IMR-90 (cell line): ENCODE measurements at regions of chr14 and their contacts with region 1.

Region 1: DNA sequence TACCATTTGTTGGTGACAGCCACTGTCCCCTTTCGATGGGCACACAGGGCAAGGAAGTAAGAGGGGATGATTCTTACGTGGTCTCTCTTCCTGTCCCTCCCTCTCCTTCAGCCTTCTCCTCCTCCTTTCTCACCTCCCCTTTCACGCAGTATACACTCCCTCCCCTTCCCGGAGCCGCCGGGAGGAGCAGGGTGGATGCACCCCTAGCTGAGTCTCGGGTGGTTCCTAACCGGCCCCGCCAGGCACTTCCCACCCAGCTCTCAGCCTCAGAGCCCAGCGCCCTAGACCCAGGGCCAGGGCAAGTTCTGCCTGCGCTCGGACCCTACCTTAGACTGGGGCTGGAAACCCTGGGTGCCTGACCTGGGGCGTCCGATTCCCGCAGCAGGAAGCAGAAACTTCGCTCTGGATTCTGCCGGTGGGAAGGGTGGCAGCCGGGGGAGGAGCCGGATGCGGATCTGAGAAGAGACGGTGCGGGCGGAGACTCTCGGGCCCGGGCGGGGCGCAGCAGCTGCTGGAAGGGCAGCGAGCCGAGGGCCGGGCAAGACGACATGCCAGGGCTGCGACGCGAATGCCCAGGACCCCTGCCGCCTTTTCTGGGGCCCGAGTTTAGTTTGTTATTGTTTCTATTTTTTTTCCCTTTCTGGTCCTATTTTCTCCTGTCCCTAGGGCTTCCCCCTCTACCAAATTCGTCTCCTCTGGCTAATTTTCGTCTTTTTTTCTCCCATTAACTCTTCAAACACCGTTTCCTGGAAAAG is at the start of gene TEP1:
- DNase-seq: peak; percentile 79
- ATAC-seq: peak; percentile 93
- H3K4me3 ChIP-seq: peak within 1 kb of the TSS; percentile 79
- H3K27ac ChIP-seq: peak within 1 kb of the TSS; percentile 98
- H3K4me1 ChIP-seq: peaks cover 6% of the 10 kb centered on the region
- H3K27me3 ChIP-seq: 0 out of 2 replicates have a peak, but pooled peaks cover 2% of the 10 kb centered on the region
- CTCF ChIP-seq: no peak
- POLR2A ChIP-seq: peak; percentile 80
- RAD21 ChIP-seq: no peak
- total RNA-seq, gene TEP1: 7.8 and 12.4 TPM in 2 replicates

Region 2: GRCh38 chr14:19771895-19772430 is 641.3 kb before region 1 on chr14:
- CTCF ChIA-PET with region 1: no interaction called
- POLR2A ChIA-PET with region 1: no interaction called
- dilution Hi-C with region 1: no loop called
- in situ Hi-C with region 1: no loop called
- intact Hi-C with region 1: no loop called
- DNase-seq: no peak
- ATAC-seq: no peak
- H3K4me3 ChIP-seq: no peak overlapping the region
- H3K27ac ChIP-seq: no peak overlapping the region
- H3K4me1 ChIP-seq: no peaks in the 10 kb centered on the region
- H3K27me3 ChIP-seq: no peaks in the 10 kb centered on the region
- CTCF ChIP-seq: no peak
- POLR2A ChIP-seq: no peak
- RAD21 ChIP-seq: no peak

Region 3: GRCh38 chr14:20356422-20356821 is 56.8 kb before region 1 on chr14:
- CTCF ChIA-PET with region 1: no interaction called
- POLR2A ChIA-PET with region 1: no interaction called
- dilution Hi-C with region 1: no loop called
- in situ Hi-C with region 1: no loop called
- intact Hi-C with region 1: loop called (anchors 5 kb)
- DNase-seq: peak; percentile 4
- ATAC-seq: no peak
- H3K4me3 ChIP-seq: no peak overlapping the region
- H3K27ac ChIP-seq: no peak overlapping the region
- H3K4me1 ChIP-seq: no peaks in the 10 kb centered on the region
- H3K27me3 ChIP-seq: no peaks in the 10 kb centered on the region
- CTCF ChIP-seq: no peak
- POLR2A ChIP-seq: no peak
- RAD21 ChIP-seq: no peak

Region 4: GRCh38 chr14:20424851-20425250 is 11.6 kb after region 1 on chr14:
- CTCF ChIA-PET with region 1: interaction called, 12 read pairs
- POLR2A ChIA-PET with region 1: no interaction called
- dilution Hi-C with region 1: no loop called
- in situ Hi-C with region 1: no loop called
- intact Hi-C with region 1: no loop called
- DNase-seq: no peak
- ATAC-seq: no peak
- H3K4me3 ChIP-seq: no peak overlapping the region
- H3K27ac ChIP-seq: no peak overlapping the region
- H3K4me1 ChIP-seq: 0 out of 2 replicates have a peak, but pooled peaks cover 2% of the 10 kb centered on the region
- H3K27me3 ChIP-seq: peaks cover 1% of the 10 kb centered on the region
- CTCF ChIP-seq: no peak
- POLR2A ChIP-seq: no peak
- RAD21 ChIP-seq: no peak

Region 5: DNA sequence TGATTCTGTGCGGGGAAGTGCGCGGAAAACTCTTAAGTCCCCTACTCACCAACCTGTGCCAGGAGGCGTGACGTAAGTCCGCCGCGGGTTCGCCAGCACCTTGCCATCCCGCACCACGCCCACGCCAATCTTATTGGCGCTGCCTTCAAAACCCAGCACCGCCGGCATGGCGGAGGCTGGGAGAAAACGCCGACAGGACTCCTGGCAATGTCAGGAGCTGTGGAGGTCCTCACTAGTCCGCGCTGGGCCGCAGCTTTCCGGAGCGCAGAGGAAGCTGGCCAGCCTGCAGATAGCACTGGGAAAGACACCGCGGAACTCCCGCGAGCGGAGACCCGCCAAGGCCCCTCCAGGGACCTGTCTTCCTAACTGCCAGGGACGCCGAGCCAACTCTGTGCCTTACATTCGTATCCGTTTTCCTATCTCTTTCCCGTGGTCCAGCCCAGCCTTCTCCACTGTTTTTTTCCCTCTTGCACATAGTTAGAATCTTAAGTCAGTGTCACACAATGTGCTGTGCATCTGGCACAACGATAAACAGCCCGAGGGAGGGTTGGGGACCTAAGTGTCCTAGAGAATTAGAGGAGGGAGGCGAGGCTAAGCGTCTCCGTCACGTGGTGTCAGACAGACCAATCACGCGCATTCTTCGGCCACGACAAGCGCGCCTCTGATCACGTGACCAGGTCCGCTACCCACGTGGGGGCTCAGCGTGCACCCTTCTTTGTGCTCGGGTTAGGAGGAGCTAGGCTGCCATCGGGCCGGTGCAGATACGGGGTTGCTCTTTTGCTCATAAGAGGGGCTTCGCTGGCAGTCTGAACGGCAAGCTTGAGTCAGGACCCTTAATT is 41.5 kb after region 1 on chr14 and contains the starts of genes APEX1 and OSGEP:
- CTCF ChIA-PET with region 1: interaction called, 7 read pairs
- POLR2A ChIA-PET with region 1: no interaction called
- dilution Hi-C with region 1: no loop called
- in situ Hi-C with region 1: no loop called
- intact Hi-C with region 1: loop called (anchors 1 kb)
- DNase-seq: peak; percentile 99
- ATAC-seq: peak; percentile 90
- H3K4me3 ChIP-seq: peak within 1 kb of the TSS; percentile 62
- H3K27ac ChIP-seq: peak within 1 kb of the TSS; percentile 80
- H3K4me1 ChIP-seq: no peaks in the 10 kb centered on the region
- H3K27me3 ChIP-seq: no peaks in the 10 kb centered on the region
- CTCF ChIP-seq: no peak
- POLR2A ChIP-seq: peak; percentile 87
- RAD21 ChIP-seq: no peak
- total RNA-seq, gene APEX1: 125 and 141 TPM in 2 replicates
- total RNA-seq, gene OSGEP: 32.4 and 38.0 TPM in 2 replicates

Region 6: DNA sequence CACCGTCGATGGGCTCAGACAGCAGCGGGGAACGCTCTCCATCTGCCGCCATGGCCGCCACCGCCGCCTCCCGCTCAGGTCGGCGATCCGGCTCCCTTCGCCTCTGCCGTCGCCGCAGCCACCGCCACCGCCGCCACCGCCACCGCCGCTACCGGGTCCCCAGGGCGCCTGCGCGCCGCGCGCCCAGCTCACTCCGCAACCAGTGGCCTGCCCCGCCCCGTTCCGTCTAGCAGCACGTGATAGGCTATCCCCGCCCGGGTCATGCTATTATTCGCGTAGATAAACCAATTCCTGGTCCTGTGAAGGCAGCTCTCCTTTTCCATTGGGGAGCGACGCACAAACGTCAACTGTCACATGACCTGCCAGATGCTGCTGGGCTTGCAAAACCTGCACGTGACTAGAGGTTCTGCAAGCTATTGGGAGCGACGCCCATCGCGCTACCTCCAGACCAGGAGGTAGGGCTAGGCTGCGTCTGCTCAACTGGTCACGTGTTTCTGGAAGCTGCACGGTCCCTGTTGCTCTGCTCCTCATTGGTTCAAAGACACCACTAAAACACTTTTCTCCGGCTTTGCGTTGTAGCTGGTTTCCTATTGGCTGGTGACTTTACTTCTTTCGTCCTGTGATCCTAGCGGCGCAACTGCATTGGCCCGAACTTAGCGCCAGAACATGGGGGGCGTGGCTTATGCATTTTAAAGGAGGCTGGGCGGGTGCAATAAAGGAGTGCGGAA is 48.2 kb after region 1 on chr14 and contains the start of gene PIP4P1:
- CTCF ChIA-PET with region 1: no interaction called
- POLR2A ChIA-PET with region 1: interaction called, 18 read pairs
- dilution Hi-C with region 1: no loop called
- in situ Hi-C with region 1: no loop called
- intact Hi-C with region 1: loop called (anchors 1 kb)
- DNase-seq: peak; percentile 100
- ATAC-seq: peak; percentile 96
- H3K4me3 ChIP-seq: peak within 1 kb of the TSS; percentile 53
- H3K27ac ChIP-seq: peak within 1 kb of the TSS; percentile 54
- H3K4me1 ChIP-seq: 0 out of 2 replicates have a peak, but pooled peaks cover 4% of the 10 kb centered on the region
- H3K27me3 ChIP-seq: no peaks in the 10 kb centered on the region
- CTCF ChIP-seq: no peak
- POLR2A ChIP-seq: no peak; the same call in none of the 2 replicates
- RAD21 ChIP-seq: no peak
- total RNA-seq, gene PIP4P1: 15.0 and 15.2 TPM in 2 replicates

Region 7: DNA sequence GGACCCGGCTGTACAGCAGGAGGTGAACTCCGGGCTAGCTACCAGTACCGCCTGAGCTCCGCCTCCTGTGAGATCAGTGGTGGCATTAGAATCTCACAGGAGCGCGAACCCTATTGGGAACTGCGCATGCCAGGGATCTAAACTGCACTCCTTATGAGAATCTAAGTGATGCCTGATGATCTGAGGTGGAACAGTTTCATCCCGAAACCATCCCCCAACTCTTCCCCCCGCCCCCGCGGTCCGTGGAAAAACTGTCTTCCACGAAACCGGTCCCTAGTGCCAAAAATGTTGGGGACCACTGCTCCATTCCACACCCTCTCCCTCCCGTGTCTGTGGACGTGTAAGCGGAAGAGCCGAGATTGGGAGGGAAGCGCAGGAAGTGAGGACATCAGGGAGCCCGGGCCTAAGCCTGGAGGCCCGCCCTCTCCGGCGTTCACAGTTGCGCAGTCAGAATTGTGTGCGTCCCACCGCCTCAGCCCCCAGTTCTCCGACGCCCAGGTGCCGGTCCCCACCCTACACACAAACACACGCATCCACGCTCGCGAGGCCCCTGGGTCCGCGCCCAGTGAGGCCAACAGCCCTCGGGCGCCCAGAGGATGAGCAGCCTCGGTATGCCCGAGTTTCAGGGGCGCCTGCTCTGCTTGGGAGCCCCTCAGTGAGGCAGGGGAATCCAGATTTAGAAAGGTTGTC is 269.4 kb after region 1 on chr14:
- CTCF ChIA-PET with region 1: no interaction called
- POLR2A ChIA-PET with region 1: no interaction called
- dilution Hi-C with region 1: no loop called
- in situ Hi-C with region 1: loop called (anchors 10 kb)
- intact Hi-C with region 1: loop called (anchors 2 kb)
- DNase-seq: peak; percentile 92
- ATAC-seq: peak; percentile 67
- H3K4me3 ChIP-seq: peak overlapping the region; percentile 65
- H3K27ac ChIP-seq: peak overlapping the region; percentile 90
- H3K4me1 ChIP-seq: no peaks in the 10 kb centered on the region
- H3K27me3 ChIP-seq: no peaks in the 10 kb centered on the region
- CTCF ChIP-seq: no peak
- POLR2A ChIP-seq: peak; percentile 92
- RAD21 ChIP-seq: no peak

Region 8: DNA sequence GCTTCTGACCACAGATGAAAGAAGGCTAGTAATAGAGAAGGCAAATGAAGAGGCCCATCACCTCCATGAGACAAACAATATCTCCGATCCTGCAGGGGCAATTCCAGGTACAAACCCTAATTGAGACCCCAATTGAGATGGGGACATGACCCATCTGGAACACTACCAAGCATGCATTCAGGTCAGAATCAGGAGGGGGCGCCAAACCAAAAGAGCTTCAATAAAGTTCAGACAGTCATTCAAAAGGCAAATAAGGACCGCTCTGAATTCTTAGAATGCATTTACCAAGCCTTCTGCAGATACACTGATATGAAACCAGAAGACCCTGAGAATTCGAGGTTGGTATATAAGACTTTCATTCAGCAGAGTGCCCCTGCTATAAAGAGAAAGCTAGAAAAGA is 344.7 kb after region 1 on chr14:
- CTCF ChIA-PET with region 1: no interaction called
- POLR2A ChIA-PET with region 1: no interaction called
- dilution Hi-C with region 1: no loop called
- in situ Hi-C with region 1: no loop called
- intact Hi-C with region 1: no loop called
- DNase-seq: no peak
- ATAC-seq: no peak
- H3K4me3 ChIP-seq: no peak overlapping the region
- H3K27ac ChIP-seq: no peak overlapping the region
- H3K4me1 ChIP-seq: no peaks in the 10 kb centered on the region
- H3K27me3 ChIP-seq: no peaks in the 10 kb centered on the region
- CTCF ChIP-seq: no peak
- POLR2A ChIP-seq: no peak
- RAD21 ChIP-seq: no peak